Heart right ventricle (tissue), 16 donors: ENCODE measurements at regions of chr17 and their contacts with region 1.

Region 1: DNA sequence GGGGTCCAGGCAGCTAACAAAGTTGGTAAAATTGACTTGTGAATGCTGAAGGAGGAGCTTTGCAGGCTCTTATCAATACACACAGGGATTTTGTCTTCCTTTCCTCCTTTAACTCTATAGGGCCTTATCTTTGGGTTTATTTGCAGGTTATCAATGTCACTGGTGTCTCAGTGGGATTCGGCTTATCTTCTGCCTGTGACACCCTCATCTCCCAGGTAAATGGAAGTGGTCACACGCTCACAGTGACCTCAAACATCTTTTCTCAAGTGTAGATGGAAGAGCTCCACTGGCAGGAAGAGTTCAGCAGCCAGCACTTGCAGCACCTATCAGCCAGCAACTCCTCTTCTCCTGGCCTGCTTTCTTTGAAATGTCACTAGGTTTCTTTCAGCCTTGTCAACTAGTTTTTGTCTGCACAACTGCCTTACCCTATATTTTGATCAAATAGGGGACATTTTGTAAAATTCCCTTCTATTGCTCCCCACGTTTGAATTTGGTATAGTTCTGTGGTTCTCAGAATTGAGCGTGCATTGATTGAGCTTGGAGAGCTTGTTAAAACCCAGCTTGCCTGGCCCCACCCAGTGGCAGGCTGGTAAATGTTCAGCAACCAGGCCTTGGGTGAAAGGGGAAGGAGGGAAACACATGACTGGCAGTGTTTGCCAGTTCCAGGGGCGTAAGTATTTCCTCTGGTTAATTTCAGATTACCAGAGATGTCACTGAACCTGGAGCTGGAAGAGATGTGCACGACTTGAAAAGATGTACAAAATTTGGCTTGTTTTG is 12.8 kb downstream of the SLC47A1 start:
- DNase-seq: peak; percentile 33 to 41
- ATAC-seq: peak in 7 of 8 donors; percentile 44 to 83 (median 73)
- H3K4me3 ChIP-seq: no peak overlapping the region
- H3K27ac ChIP-seq: peak overlapping the region in 2 of 10 donors; percentile 13 to 28
- H3K4me1 ChIP-seq: peaks cover 0 to 32% (median 3%) of the 10 kb centered on the region in 9 donors
- H3K27me3 ChIP-seq: peaks cover 0 to 4% (median 0%) of the 10 kb centered on the region in 7 donors
- CTCF ChIP-seq: peak in 7 of 9 donors; percentile 14 to 50 (median 34)

Region 2: GRCh38 chr17:19482576-19482975 is 63.9 kb before region 1 on chr17:
- intact Hi-C with region 1: loop called in 1 of 10 experiments (anchors 10 kb)
- DNase-seq: no peak
- ATAC-seq: no peak
- H3K4me3 ChIP-seq: no peak overlapping the region
- H3K27ac ChIP-seq: no peak overlapping the region
- H3K4me1 ChIP-seq: peaks cover 0 to 8% (median 0%) of the 10 kb centered on the region in 9 donors
- H3K27me3 ChIP-seq: no peaks in the 10 kb centered on the region
- CTCF ChIP-seq: no peak

Region 3: GRCh38 chr17:19904924-19905323 is 358.4 kb after region 1 on chr17:
- intact Hi-C with region 1: no loop called
- DNase-seq: peak in 1 of 2 donors; percentile 37
- ATAC-seq: peak in 3 of 8 donors; percentile 47 to 71 (median 52)
- H3K4me3 ChIP-seq: no peak overlapping the region
- H3K27ac ChIP-seq: peak overlapping the region in 1 of 10 donors; percentile 36
- H3K4me1 ChIP-seq: peaks cover 0 to 22% (median 0%) of the 10 kb centered on the region in 9 donors
- H3K27me3 ChIP-seq: no peaks in the 10 kb centered on the region
- CTCF ChIP-seq: no peak